Spleen (tissue), 13 donors: ENCODE measurements at regions of chr11 and their contacts with region 1.

Region 1: DNA sequence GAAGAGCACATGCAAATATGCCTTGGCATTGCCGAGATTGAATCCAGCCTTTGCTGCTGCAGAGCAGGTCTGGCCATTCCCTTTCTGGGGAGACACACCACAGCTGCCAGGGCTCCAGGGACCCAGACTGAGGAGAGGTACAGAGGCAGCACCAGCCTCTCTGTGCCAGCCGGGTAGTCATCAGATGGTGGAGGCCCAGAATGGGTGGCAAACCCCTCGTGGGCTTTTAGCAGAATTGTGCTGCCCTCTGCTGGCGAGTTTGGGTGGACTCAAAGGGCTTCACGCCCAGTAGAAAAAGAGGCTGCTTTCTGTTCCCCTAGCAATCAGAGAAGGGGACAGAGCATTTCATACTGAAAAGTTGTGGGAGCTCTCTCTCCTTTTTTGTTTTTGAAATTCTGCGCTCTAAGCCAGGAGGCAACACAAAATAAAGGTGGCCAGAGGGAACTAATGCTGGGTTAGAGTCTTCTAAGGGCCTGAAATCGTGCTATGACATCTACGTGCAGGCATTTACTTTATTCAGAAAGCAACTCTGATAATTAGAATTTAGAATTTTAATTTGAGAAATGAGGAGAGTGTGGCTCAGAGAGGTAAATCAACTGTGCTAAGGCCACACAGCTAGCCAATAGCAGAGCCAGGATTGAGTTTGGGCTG is 158.8 kb upstream of the NAV2 start:
- DNase-seq: peak; percentile 91
- H3K4me3 ChIP-seq: no peak overlapping the region
- H3K27ac ChIP-seq: no peak overlapping the region
- H3K4me1 ChIP-seq: peaks cover 0 to 4% (median 0%) of the 10 kb centered on the region in 6 donors
- H3K27me3 ChIP-seq: peaks cover 0 to 13% (median 0%) of the 10 kb centered on the region in 7 donors
- CTCF ChIP-seq: peak; percentile 40 to 87 (median 81)
- POLR2A ChIP-seq: no peak

Region 2: DNA sequence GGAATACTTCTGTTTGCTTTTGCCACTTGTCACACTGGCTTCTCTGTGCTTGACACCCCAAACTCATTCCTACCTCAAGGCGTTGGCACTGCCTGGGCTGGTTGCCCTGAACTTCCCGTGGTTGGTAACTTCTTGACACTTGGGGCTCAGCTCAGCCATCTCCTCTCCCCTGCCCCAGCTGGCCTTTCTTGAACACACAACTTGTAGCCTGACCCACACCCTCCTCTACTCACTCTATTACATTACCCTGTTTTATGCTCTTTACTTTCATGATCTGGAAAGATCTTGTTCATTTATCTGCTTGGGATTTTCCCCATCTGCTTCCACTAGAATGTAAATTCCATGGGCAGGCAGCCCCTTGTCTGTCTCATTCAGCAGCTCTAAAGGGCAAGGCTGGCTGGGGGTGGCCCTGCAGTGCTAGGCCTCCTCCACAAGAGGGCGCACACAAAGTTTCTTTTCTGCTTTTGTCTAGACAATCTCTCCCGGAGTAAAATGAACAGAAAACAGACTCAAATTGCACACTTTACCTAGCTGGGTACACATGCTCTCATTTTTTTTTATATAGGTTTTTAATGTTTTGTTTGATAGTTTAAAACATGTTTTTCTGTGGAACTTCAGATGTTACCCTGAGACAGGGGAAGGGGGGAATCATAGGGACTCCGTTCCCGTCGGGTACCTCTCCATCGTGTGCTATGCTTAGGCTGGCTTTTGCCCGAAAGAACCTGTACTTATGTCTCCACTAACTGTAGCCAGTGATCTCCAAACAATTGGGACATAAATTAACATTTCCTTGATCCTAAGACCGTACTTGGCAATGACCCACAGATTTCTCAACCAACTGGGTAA is 476.8 kb before region 1 on chr11:
- intact Hi-C with region 1: loop called (anchors 5 kb)
- DNase-seq: peak; percentile 84
- H3K4me3 ChIP-seq: no peak overlapping the region
- H3K27ac ChIP-seq: no peak overlapping the region
- H3K4me1 ChIP-seq: peaks cover 0 to 6% (median 0%) of the 10 kb centered on the region in 6 donors
- H3K27me3 ChIP-seq: no peaks in the 10 kb centered on the region
- CTCF ChIP-seq: peak; percentile 58 to 99 (median 94)
- POLR2A ChIP-seq: no peak

Region 3: GRCh38 chr11:19259487-19260345 is 294.1 kb before region 1 on chr11:
- intact Hi-C with region 1: loop called (anchors 5 kb)
- DNase-seq: peak; percentile 88
- H3K4me3 ChIP-seq: peak overlapping the region in 3 of 8 donors; percentile 6 to 54 (median 11)
- H3K27ac ChIP-seq: no peak overlapping the region
- H3K4me1 ChIP-seq: peaks cover 0 to 6% (median 0%) of the 10 kb centered on the region in 6 donors
- H3K27me3 ChIP-seq: no peaks in the 10 kb centered on the region
- CTCF ChIP-seq: peak; percentile 63 to 94 (median 87)
- POLR2A ChIP-seq: no peak

Region 4: GRCh38 chr11:19311308-19312030 is 242.3 kb before region 1 on chr11:
- intact Hi-C with region 1: loop called (anchors 5 kb)
- DNase-seq: no peak
- H3K4me3 ChIP-seq: no peak overlapping the region
- H3K27ac ChIP-seq: no peak overlapping the region
- H3K4me1 ChIP-seq: peaks cover 0 to 3% (median 0%) of the 10 kb centered on the region in 6 donors
- H3K27me3 ChIP-seq: no peaks in the 10 kb centered on the region
- CTCF ChIP-seq: peak in 10 of 11 experiments; percentile 31 to 82 (median 68)
- POLR2A ChIP-seq: no peak

Region 5: GRCh38 chr11:19660076-19660475 is 106.3 kb after region 1 on chr11:
- intact Hi-C with region 1: no loop called
- DNase-seq: no peak
- H3K4me3 ChIP-seq: no peak overlapping the region
- H3K27ac ChIP-seq: no peak overlapping the region
- H3K4me1 ChIP-seq: peaks cover 0 to 3% (median 0%) of the 10 kb centered on the region in 6 donors
- H3K27me3 ChIP-seq: no peaks in the 10 kb centered on the region
- CTCF ChIP-seq: no peak
- POLR2A ChIP-seq: no peak

Region 6: GRCh38 chr11:19829109-19829824 is 275.5 kb after region 1 on chr11:
- intact Hi-C with region 1: no loop called
- DNase-seq: no peak
- H3K4me3 ChIP-seq: no peak overlapping the region
- H3K27ac ChIP-seq: no peak overlapping the region
- H3K4me1 ChIP-seq: no peaks in the 10 kb centered on the region
- H3K27me3 ChIP-seq: no peaks in the 10 kb centered on the region
- CTCF ChIP-seq: no peak
- POLR2A ChIP-seq: no peak